Vagina (tissue), 2 donors: ENCODE measurements at regions of chr3 and their contacts with region 1.

Region 1: GRCh38 chr3:77370413-77370812 is 330.5 kb downstream of the ROBO2 start:
- DNase-seq: no peak
- H3K4me3 ChIP-seq: no peak overlapping the region
- H3K27ac ChIP-seq: no peak overlapping the region
- H3K4me1 ChIP-seq: no peaks in the 10 kb centered on the region
- H3K27me3 ChIP-seq: no peaks in the 10 kb centered on the region
- CTCF ChIP-seq: no peak
- POLR2A ChIP-seq: no peak

Region 2: GRCh38 chr3:77412021-77412438 is 41.6 kb after region 1 on chr3:
- intact Hi-C with region 1: loop called (anchors 1 kb)
- DNase-seq: no peak
- H3K4me3 ChIP-seq: no peak overlapping the region
- H3K27ac ChIP-seq: no peak overlapping the region
- H3K4me1 ChIP-seq: no peaks in the 10 kb centered on the region
- H3K27me3 ChIP-seq: no peaks in the 10 kb centered on the region
- CTCF ChIP-seq: no peak
- POLR2A ChIP-seq: no peak

Region 3: DNA sequence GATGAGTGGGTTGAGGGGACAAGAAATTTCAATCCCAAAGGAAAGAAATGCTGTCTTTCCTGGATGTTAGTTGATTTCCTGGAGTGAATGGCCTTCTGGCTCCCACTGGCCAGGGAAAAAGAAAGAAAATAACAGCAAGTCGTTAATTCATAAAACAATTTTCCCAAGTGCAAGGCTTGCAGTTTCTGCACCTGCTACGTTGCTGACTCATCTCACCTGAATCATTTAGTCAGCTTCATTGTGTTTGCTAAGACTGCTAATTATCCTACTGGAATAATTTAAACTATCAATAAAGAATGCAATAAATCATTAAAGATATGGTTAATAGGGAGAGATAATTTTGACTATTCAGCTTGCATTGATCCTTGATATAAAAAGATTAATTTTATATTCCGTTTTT is 57.1 kb after region 1 on chr3:
- intact Hi-C with region 1: no loop called
- DNase-seq: no peak
- H3K4me3 ChIP-seq: no peak overlapping the region
- H3K27ac ChIP-seq: no peak overlapping the region
- H3K4me1 ChIP-seq: no peaks in the 10 kb centered on the region
- H3K27me3 ChIP-seq: no peaks in the 10 kb centered on the region
- CTCF ChIP-seq: no peak
- POLR2A ChIP-seq: no peak